ENCODE measurements at regions of chr5 and their contacts with region 1.

Region 1: DNA sequence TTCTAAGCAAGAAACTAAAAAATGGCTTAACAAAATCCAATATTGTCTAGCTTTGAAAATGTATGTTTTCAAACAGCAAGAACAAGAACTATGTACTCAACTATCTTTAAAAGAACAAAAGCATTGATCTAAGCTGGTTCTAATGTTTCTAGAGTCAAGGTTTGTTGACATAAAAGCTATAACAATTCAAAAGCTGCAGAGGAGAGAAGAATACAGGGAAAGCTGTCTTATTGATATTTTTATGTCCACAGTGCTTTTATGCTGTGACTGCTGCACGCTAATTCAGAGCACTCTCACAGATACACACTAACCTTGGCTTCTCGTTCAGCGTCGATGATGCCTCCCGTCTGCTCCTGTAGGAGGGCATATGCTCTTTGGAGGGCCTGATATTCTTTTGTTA is 129.5 kb upstream of the DPYSL3 start:
- DNase-seq: no peak
- H3K4me3 ChIP-seq: no peak overlapping the region
- H3K27ac ChIP-seq: no peak overlapping the region
- H3K4me1 ChIP-seq: no peaks in the 10 kb centered on the region
- H3K27me3 ChIP-seq: no peaks in the 10 kb centered on the region

Region 2: GRCh38 chr5:147628058-147628895 is 11.0 kb before region 1 on chr5:
- CTCF ChIA-PET with region 1: interaction called, 17 read pairs
- POLR2A ChIA-PET with region 1: no interaction called
- DNase-seq: peak; percentile 76 to 86 (median 77)
- H3K4me3 ChIP-seq: no peak overlapping the region
- H3K27ac ChIP-seq: no peak overlapping the region
- H3K4me1 ChIP-seq: no peaks in the 10 kb centered on the region
- H3K27me3 ChIP-seq: no peaks in the 10 kb centered on the region